Keratinocyte (primary cell): ENCODE measurements at regions of chrX and their contacts with region 1.

Region 1: GRCh38 chrX:152632445-152633097 is 5.1 kb upstream of the GABRQ start:
- DNase-seq: no peak
- H3K4me3 ChIP-seq: no peak overlapping the region
- H3K27ac ChIP-seq: no peak overlapping the region
- H3K4me1 ChIP-seq: no peaks in the 10 kb centered on the region
- H3K27me3 ChIP-seq: peaks cover 5% of the 10 kb centered on the region
- CTCF ChIP-seq: peak; percentile 59 to 80 (median 76)

Region 2: GRCh38 chrX:151724563-151725337 is 907.8 kb before region 1 on chrX:
- dilution Hi-C with region 1: loop called (anchors 25 kb)
- DNase-seq: no peak
- H3K4me3 ChIP-seq: no peak overlapping the region
- H3K27ac ChIP-seq: no peak overlapping the region
- H3K4me1 ChIP-seq: no peaks in the 10 kb centered on the region
- H3K27me3 ChIP-seq: no peaks in the 10 kb centered on the region
- CTCF ChIP-seq: no peak

Region 3: GRCh38 chrX:152674135-152674534 is 41.6 kb after region 1 on chrX:
- dilution Hi-C with region 1: no loop called
- DNase-seq: no peak
- H3K4me3 ChIP-seq: no peak overlapping the region
- H3K27ac ChIP-seq: no peak overlapping the region
- H3K4me1 ChIP-seq: no peaks in the 10 kb centered on the region
- H3K27me3 ChIP-seq: no peaks in the 10 kb centered on the region
- CTCF ChIP-seq: no peak